ENCODE measurements at regions of chr10 and their contacts with region 1.

Region 1: DNA sequence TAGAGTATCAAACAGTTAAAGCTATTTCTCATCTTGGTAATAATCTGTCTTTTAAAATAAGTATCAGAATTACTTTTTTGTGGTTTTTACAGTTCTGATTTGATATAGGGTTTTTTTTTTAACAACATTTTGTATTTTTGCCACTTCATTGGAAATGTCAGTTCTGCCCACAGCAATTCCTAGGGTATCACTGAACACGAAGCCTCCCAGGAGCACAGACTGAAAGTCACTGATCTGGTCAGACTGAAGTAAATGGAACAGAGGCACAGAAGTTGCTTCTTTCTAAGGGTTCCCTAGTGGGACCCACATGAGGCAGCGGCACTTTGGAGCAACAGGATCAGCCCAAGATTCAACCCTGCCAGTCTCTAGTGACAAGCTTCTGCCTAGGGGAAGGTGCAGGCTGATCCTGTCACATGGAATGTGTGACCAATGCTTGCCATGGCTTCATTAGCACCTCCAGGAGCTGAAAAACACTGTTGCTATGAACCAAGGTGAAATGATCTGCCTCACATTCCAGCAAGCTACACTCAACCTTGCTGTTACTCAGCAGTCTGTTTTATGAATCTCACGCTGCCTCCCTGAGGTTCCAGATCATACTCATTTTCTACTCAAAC is 273.4 kb upstream of the CSTF2T start:
- DNase-seq: no peak
- H3K4me3 ChIP-seq: no peak overlapping the region
- H3K27ac ChIP-seq: no peak overlapping the region
- H3K4me1 ChIP-seq: no peaks in the 10 kb centered on the region
- H3K27me3 ChIP-seq: no peaks in the 10 kb centered on the region
- CTCF ChIP-seq: no peak
- EP300 ChIP-seq: no peak
- POLR2A ChIP-seq: no peak
- RAD21 ChIP-seq: peak in 1 of 2 experiments; percentile 10; a peak in 1 of 4 replicates

Region 2: DNA sequence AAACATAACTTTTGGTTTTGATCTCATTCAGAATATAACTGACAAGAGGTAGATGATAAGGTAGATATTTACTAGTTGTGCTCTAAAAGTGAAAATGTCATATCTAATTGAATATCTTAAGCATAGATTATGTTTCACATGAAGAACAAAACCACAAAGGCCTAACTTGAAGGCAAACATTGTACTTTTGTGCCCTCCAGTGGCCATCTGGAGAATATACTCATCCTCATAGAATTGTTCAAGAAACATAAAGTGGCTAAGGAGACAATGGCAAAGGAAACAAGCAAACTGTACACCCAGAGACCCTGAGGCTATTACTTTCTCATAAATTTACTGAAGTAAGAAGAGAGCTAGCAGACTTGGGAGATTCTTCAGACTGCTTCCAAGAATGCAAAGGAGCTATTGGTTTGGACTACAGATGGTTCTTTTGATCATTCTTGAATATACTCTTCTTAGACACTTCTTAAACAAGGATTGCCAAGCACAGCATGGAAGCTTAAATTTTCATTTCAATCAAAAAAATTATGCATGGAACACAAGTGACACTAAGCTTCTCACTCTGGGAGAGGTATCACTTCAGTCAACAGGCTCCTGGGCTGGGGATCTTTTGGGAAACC is 243.0 kb after region 1 on chr10:
- CTCF ChIA-PET with region 1: interaction called, 13 read pairs
- POLR2A ChIA-PET with region 1: no interaction called
- DNase-seq: no peak
- H3K4me3 ChIP-seq: no peak overlapping the region
- H3K27ac ChIP-seq: no peak overlapping the region
- H3K4me1 ChIP-seq: peaks cover 0 to 18% (median 10%) of the 10 kb centered on the region in 4 experiments; a peak in 3 of 7 replicates
- H3K27me3 ChIP-seq: no peaks in the 10 kb centered on the region
- CTCF ChIP-seq: peak in 2 of 3 experiments; percentile 50 to 71; a peak in 2 of 4 replicates
- EP300 ChIP-seq: no peak
- POLR2A ChIP-seq: no peak
- RAD21 ChIP-seq: peak; percentile 95 to 96